WTC11 (cell line): ENCODE measurements at regions of chr22 and their contacts with region 1.

Region 1: DNA sequence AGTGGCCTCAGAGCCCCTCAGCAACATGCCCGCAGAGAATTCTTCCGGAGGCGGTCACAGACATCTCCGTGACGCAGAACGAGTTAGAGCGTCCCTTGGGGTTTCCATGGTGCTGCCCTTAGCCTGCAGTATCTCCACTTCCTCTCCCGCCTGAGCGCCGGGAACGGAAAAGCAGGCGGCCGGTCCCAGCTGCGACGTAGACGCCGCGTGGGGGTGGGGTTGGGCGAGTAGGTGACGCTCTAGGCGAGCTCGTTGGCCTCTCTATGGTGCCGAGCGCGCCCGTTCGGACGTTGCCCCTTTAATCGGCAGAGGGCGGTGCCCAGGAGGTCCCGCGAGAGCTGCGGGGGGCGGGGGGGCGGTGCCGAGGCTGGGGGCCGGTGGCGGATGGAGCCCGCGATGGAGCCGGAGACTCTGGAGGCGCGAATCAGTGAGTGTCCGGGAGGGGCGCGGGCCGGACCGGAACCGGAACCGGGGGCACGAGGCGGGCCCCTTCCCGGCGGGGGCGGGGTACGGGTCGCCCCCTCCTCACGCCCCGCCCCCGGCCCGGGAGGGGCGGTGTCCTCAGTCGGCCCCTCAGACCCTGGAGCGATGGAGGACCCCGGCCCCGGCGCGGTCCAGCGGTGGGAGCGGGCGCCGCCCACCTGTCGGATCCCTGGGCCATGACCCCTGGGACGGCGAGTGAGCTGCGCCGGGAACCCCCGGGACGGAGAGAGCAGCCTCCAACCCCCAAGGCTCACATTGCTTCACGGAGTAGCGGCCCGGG is at the start of gene GGA1:
- DNase-seq: peak; percentile 90
- ATAC-seq: peak; percentile 70
- H3K4me3 Mint-ChIP-seq: peak within 1 kb of the TSS; percentile 90
- H3K27ac Mint-ChIP-seq: peak within 1 kb of the TSS; percentile 98
- H3K4me1 Mint-ChIP-seq: peaks cover 18% of the 10 kb centered on the region
- H3K27me3 Mint-ChIP-seq: no peaks in the 10 kb centered on the region
- CTCF ChIP-seq: no peak
- total RNA-seq, gene GGA1: 59.5 to 66.3 TPM (median 61.6 TPM) in 3 replicates

Region 2: GRCh38 chr22:37428649-37429586 is 179.7 kb before region 1 on chr22:
- CTCF ChIA-PET with region 1: no interaction called
- POLR2A ChIA-PET with region 1: no interaction called
- DNase-seq: peak; percentile 81
- ATAC-seq: peak; percentile 63
- H3K4me3 Mint-ChIP-seq: peak overlapping the region; percentile 47
- H3K27ac Mint-ChIP-seq: no peak overlapping the region
- H3K4me1 Mint-ChIP-seq: peaks cover 14% of the 10 kb centered on the region
- H3K27me3 Mint-ChIP-seq: peaks cover 50% of the 10 kb centered on the region
- CTCF ChIP-seq: peak; percentile 68

Region 3: DNA sequence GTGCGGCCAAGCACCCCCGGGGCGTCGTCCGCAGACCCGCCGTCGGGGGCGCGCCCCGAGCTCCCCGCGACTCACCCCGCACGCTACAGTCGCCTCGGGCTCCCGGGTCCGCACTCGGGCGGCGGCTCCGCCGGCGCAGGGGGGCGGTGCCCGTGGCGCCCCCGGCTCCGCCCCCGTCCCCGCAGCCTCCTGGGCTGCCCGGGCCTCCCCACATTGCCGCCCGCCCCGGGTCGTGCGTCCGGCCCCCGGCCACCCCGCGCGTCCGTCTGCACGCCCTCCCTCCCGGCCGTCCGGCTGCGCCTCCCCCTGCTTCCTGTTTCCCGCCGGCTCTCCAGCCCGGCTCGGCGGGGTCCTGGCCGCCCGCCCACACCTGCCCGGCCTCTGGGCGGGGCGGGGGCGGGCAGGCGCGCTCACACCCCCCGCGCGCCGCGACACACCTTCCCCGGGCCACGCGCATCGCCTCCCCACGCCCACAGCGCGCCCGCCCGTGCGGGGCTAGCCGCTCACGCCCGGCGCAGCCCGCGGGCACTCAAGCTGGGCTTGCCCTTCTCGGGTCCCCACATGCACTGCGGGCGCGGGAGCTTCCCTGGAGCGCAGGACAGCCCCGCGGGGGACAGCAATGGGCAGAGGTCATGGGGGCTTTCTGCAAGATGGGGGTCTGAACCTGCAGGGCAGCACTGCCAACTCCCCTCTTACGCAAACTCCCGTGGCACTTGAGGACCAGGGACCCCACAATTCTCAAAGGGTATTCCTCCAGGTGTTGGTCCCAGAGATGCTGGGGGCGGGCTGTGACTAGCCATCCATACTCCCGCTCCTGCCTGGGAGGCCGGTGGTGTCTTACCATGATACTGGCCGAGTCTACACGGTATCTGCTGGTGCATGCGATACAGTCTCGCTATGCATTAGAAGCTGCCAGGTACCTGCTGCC is 89.1 kb before region 1 on chr22 and contains the start of gene CARD10:
- CTCF ChIA-PET with region 1: interaction called, 12 read pairs
- POLR2A ChIA-PET with region 1: no interaction called
- DNase-seq: peak; percentile 46
- ATAC-seq: peak; percentile 51
- H3K4me3 Mint-ChIP-seq: peak within 1 kb of the TSS; percentile 79
- H3K27ac Mint-ChIP-seq: no peak within 1 kb of the TSS
- H3K4me1 Mint-ChIP-seq: peaks cover 11% of the 10 kb centered on the region
- H3K27me3 Mint-ChIP-seq: peaks cover 34% of the 10 kb centered on the region
- CTCF ChIP-seq: no peak
- total RNA-seq, gene CARD10: 14.6 to 17.5 TPM (median 16.0 TPM) in 3 replicates

Region 4: DNA sequence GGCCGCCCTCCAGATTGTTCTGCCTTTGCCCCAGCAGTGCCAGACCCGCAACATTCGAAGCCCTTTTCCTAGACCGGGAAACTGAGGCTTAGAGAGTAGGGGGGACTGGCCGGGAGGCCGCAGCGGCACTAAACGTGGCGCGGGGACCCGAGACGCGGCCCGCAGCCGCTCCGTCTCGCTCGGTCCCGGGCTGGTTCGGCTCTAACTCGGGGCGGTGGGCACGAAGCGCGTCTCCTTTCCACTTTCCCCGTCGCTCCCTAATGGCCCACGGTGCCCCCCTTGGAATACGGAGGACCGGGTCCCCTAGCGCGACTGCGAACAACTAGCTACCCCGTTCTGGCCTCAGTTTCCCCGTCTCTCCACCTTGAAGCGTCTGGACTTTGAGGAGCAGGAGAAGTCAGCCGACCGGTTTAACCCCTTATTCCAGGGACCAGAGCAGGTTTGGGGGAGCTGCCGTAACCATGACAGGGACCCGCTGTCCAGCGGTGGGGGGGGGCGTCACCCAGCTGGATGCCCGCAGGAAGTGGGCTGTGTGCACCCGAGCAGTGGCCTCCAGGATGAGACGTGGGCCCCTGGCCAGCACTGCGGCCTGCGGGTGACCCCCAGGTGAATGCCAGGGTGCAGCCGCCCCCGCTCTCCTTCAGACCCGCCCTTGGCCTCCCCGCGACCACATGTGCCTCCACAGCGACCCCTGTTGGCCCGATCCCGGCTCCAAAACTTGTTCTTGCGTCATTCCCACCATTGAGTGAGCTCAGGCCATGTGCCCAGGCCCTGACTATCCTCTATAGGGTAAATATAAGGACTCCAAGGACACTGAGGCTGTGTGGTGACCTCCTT is 47.2 kb before region 1 on chr22:
- CTCF ChIA-PET with region 1: interaction called, 17 read pairs
- POLR2A ChIA-PET with region 1: interaction called, 8 read pairs
- DNase-seq: peak; percentile 95
- ATAC-seq: peak; percentile 53
- H3K4me3 Mint-ChIP-seq: peak overlapping the region; percentile 73
- H3K27ac Mint-ChIP-seq: no peak overlapping the region
- H3K4me1 Mint-ChIP-seq: peaks cover 48% of the 10 kb centered on the region
- H3K27me3 Mint-ChIP-seq: peaks cover 52% of the 10 kb centered on the region
- CTCF ChIP-seq: peak; percentile 75

Region 5: DNA sequence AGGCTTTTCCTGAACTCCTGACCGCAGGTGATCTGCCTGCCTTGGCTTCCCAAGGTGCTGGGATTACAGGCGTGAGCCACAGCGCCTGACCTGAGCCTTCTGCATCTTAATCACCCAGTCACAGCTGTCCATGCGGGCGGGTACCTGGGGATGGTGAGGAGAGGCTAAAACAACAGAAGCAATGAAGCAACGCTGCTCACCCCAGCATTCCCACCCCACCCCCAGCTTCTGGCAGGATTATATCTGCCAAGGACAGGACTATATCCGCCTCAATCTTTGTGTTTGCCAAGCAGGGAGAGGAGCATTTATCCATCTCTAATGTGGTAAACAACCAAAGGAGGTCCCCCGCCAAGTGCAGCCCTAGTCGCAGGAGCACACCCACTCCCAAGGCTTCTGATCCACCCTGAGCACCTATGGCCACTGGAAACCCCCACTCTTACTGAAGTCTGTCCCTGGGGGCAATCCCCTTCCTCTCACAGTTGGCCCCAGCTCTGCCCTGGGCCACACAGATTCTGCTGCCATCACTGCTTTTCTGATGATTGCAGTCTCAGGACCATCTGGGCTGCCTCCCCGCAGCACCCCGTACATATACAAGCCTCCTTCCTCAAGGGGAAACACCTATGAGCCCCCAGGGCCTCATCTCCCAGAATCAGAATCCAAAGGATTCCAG is 20.0 kb before region 1 on chr22:
- CTCF ChIA-PET with region 1: interaction called, 99 read pairs
- POLR2A ChIA-PET with region 1: interaction called, 7 read pairs
- DNase-seq: no peak
- ATAC-seq: no peak
- H3K4me3 Mint-ChIP-seq: no peak overlapping the region
- H3K27ac Mint-ChIP-seq: no peak overlapping the region
- H3K4me1 Mint-ChIP-seq: peaks cover 6% of the 10 kb centered on the region
- H3K27me3 Mint-ChIP-seq: 0 out of 2 replicates have a peak, but pooled peaks cover 2% of the 10 kb centered on the region
- CTCF ChIP-seq: no peak

Region 6: DNA sequence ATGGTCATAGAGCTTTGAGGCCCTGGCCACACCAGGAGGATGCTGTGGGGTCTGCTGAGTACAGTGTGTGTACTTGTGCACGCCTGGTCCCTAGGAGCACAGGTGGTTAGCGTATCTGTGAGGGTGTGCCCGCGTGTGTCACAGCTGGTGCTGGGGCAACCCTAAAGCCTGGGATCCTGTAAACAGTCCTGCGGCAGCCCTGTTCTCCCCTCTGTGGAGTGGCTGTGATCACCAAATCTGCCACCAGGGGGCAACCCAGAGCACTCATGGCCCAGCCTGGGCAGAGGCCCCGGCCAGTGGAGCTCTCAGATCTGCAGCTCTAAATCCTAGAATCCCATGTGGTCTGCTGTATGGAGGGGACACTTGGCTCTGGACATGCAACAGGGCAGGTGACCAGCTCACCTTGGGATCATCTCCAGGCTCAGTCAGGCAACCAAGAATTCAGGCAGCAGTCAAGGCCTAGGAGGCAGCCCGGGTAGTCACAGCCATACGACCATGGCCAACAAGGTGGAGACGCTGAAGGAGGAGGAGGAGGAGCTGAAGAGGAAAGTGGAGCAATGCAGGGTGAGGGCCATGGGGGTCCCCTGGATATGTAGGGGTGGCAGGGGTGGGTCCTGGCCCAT is 34.7 kb after region 1 on chr22:
- CTCF ChIA-PET with region 1: interaction called, 56 read pairs
- POLR2A ChIA-PET with region 1: interaction called, 4 read pairs
- DNase-seq: peak; percentile 93
- ATAC-seq: peak; percentile 77
- H3K4me3 Mint-ChIP-seq: no peak overlapping the region
- H3K27ac Mint-ChIP-seq: peak overlapping the region; percentile 85
- H3K4me1 Mint-ChIP-seq: peaks cover 13% of the 10 kb centered on the region
- H3K27me3 Mint-ChIP-seq: no peaks in the 10 kb centered on the region
- CTCF ChIP-seq: peak; percentile 86

Region 7: DNA sequence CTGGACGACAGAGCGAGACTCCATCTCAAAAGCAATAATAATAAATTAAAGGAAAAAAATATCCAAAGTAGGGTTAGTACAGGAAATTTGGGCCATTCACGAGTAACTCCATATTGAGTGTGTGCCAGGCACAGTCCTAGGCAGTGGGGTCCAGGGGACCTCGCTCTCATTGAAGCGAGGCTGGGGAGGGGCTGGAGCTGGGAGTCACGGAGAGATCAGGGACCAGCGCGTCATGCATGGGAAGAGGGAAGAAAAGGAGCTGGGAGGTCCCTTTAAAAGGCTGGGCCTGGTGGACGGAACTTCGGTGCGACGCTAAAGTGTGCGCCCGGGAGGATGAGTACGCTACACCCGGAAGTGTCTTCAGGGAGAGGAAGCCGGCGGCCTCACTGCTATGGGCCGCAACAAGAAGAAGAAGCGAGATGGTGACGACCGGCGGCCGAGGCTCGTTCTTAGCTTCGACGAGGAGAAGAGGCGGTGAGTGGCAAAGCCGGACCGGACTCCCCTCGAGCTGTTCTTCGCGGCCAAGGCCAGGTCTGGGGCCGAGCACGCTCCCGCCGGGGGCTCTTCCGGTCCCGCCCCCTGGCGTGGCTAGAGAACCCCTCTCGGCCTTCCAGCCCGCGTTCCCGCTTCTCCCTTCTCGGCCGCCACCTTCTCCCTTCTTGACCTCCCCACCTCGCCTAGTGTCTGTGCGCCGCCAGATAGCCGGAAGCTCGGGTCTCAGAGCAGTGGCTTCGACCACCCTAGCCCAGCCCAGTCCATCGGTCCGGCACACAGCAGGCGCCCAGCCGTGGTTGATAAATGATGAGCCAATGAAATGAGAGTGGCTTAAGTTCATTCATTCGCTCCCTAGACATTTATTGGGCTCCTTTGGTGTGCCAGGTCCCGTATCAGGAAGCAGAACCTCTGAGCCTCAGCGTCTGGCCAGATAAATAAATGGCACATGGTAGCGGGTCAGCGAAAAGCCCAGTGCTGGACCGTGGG is 77.6 kb after region 1 on chr22 and contains the start of gene NOL12:
- CTCF ChIA-PET with region 1: interaction called, 30 read pairs
- POLR2A ChIA-PET with region 1: interaction called, 6 read pairs
- DNase-seq: peak; percentile 84
- ATAC-seq: peak; percentile 84
- H3K4me3 Mint-ChIP-seq: peak within 1 kb of the TSS; percentile 99
- H3K27ac Mint-ChIP-seq: peak within 1 kb of the TSS; percentile 96
- H3K4me1 Mint-ChIP-seq: peaks cover 10% of the 10 kb centered on the region
- H3K27me3 Mint-ChIP-seq: peaks cover 1% of the 10 kb centered on the region
- CTCF ChIP-seq: no peak
- total RNA-seq, gene NOL12: 20.3 to 24.9 TPM (median 22.0 TPM) in 3 replicates

Region 8: GRCh38 chr22:37768273-37768672 is 159.6 kb after region 1 on chr22:
- CTCF ChIA-PET with region 1: no interaction called
- POLR2A ChIA-PET with region 1: no interaction called
- DNase-seq: peak; percentile 54
- ATAC-seq: peak; percentile 82
- H3K4me3 Mint-ChIP-seq: no peak overlapping the region
- H3K27ac Mint-ChIP-seq: no peak overlapping the region
- H3K4me1 Mint-ChIP-seq: no peaks in the 10 kb centered on the region
- H3K27me3 Mint-ChIP-seq: peaks cover 4% of the 10 kb centered on the region; the same call in 1 of the 2 replicates
- CTCF ChIP-seq: peak; percentile 47